CD4-positive, alpha-beta memory T cell (primary cell): ENCODE measurements at regions of chr13 and their contacts with region 1.

Region 1: DNA sequence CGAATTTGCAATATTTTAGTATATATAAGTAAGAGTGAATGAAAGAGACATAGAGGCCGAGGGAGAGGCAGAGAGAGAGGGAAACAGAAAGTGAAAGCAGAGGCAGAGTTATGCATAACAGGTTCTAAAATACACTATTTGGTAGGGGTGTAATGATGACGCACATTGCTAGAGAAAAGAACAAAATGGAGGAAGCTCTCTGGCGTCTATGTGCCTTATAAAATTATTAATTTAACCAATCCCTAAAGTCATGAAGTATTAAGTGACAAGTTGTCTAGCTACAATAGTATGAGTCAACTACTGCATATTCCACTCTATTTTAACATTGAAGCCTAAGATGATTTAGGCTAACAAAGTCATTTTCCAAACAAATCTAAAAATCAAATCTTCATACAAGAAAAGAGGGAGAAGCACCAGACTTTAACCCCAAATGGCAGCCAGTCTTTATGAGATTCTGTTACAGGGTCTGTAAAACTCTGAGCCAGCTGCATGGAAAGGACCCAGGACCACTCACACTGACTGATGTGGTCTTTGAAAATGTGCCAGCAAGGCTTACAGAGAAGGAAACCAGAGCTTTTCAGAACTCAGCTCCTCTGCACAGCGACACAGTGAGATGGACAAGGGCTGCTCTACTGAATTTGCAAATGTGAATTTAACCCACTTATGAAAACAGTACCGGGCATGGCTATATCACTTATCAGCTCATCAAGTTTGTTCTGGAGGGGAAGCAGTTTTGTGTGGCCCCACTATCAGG is 99.0 kb upstream of the SERP2 start:
- DNase-seq: peak; percentile 73 to 83 (median 78)
- H3K4me3 ChIP-seq: peak overlapping the region; percentile 48
- H3K4me3 Mint-ChIP-seq: peak overlapping the region; percentile 61 to 89 (median 77)
- H3K27ac ChIP-seq: peak overlapping the region; percentile 45
- H3K27ac Mint-ChIP-seq: peak overlapping the region; percentile 80 to 98 (median 94)
- H3K4me1 ChIP-seq: peaks cover 24% of the 10 kb centered on the region
- H3K4me1 Mint-ChIP-seq: peaks cover 24 to 40% (median 27%) of the 10 kb centered on the region in 4 donors
- H3K27me3 ChIP-seq: no peaks in the 10 kb centered on the region
- H3K27me3 Mint-ChIP-seq: peaks cover 5 to 6% of the 10 kb centered on the region in 2 donors

Region 2: DNA sequence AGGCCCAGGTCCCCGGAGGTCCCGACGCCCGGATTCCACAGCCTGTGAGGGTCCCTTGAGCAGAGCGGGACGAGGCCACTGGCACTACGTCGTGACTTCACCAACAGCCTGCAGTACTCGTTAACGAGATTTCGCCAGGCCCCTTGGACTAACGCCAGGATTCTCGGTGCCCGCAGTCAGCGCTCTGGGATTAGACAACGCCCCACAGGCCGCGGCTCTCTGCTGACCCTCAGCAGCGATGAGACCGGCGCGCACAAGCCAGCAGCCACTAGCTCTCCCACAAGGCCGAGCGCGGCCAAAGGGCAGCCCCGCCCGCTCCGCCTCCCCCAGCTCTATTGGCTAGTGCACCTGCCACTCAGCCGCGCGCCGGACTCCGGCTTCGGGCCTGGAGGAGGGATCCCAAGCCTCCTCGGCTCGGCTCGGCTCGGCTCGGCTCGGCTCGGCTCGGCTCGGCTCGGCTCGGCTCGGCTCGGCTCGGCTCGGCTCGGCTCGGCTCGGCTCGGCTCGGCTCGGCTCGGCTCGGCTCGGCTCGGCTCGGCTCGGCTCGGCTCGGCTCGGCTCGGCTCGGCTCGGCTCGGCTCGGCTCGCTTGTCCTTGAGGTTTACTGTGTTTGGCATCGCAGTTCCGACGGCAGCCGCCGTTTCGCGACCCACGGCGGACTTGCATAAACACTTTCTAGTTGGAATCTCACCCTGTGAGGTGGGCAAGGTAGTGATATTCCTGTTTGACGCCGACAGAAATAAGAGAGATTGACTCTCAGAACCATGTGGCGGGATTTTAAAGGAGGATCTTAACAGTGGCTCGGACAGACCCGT is 132.7 kb before region 1 on chr13:
- CTCF ChIA-PET with region 1: no interaction called
- POLR2A ChIA-PET with region 1: interaction called, 13 read pairs
- intact Hi-C with region 1: loop called (anchors 2 kb)
- DNase-seq: peak; percentile 87 to 94 (median 89)
- H3K4me3 ChIP-seq: peak overlapping the region; percentile 59 to 79
- H3K4me3 Mint-ChIP-seq: peak overlapping the region; percentile 90 to 98 (median 94)
- H3K27ac ChIP-seq: peak overlapping the region; percentile 83
- H3K27ac Mint-ChIP-seq: peak overlapping the region; percentile 76 to 97 (median 96)
- H3K4me1 ChIP-seq: peaks cover 14% of the 10 kb centered on the region
- H3K4me1 Mint-ChIP-seq: peaks cover 9 to 16% (median 13%) of the 10 kb centered on the region in 4 donors
- H3K27me3 ChIP-seq: no peaks in the 10 kb centered on the region
- H3K27me3 Mint-ChIP-seq: peaks cover 5 to 7% of the 10 kb centered on the region in 2 donors